Dendritic cell treated with granulocyte-macrophage colony-stimulating factor and Interleukin-4, amounts not matched to agents 40 ng/mL and 50 ng/mL, for 4 days (primary cell): ENCODE measurements at regions of chr7 and their contacts with region 1.

Region 1: GRCh38 chr7:17234398-17235031 is 63.9 kb upstream of the AHR start:
- H3K4me3 Mint-ChIP-seq: peak overlapping the region; percentile 57
- H3K27ac Mint-ChIP-seq: peak overlapping the region; percentile 96
- H3K4me1 Mint-ChIP-seq: peaks cover 53% of the 10 kb centered on the region
- H3K27me3 Mint-ChIP-seq: no peaks in the 10 kb centered on the region

Region 2: DNA sequence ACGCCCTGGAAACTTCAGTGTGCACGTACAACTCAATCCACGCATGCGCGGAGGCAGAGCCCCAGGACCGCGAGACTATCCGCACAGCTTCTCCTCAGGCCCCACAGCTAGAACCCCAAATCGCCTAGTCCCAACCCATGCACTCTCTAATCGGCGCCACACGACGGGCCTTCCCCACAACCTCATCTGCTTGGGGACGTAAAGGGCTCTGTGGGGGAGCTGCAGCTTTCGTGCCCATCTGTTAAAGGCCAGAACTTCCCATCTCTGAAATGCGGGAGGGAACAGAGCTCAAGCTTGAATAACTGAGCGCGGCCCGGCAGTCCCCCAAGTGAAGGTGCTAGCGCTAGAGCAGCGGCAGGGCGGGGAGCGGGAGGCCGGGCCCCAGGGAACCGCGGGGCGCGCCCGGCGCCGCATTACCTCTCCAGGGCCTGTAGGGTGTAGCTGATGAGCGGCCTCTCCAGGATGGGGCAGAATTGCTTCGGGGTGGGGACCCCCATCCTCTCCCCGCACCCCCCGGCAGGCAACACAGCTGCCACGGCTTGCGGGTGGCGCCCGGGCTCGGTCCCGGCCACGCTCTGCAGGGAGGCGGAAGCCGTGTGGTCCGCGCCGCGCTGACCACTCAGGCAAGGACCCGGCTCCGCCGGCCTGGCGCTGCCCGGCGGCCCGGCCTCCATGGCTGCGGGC is 813.7 kb before region 1 on chr7:
- intact Hi-C with region 1: no loop called
- H3K4me3 Mint-ChIP-seq: peak overlapping the region; percentile 84
- H3K27ac Mint-ChIP-seq: peak overlapping the region; percentile 57
- H3K4me1 Mint-ChIP-seq: peaks cover 29% of the 10 kb centered on the region
- H3K27me3 Mint-ChIP-seq: peaks cover 73% of the 10 kb centered on the region

Region 3: DNA sequence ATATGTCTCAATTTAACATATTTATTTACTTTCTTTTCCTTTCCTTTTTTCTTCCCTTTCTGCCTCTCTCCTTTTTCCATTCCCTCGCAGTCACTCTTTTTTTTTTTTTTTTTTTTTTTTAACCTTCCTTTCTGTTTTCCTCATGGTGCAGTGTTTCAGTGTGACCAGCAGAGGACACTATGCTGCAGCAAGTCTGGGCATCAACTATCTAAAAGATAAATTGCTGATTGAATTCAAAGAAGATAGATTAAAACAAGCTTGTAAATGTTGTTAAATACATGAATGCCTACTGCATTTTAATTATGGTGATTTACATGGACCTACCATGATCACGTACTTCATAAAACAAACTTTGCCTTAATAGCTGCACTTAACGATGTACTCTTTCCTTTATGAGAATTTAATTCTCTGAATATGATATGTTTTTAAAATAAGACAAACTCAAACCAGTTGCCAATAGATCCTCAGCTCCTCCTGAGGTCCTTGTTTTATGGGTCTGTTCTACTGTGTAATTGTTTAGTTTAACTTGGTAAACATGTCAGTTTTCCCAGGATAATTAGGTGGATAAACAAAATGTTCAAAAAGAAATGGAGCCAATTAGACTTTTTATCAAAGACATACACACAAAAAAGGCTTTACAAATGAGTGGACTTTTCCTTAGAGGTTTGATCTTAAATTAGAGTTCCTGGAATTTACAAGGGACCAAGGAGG is 251.7 kb before region 1 on chr7:
- intact Hi-C with region 1: loop called (anchors 5 kb)
- H3K4me3 Mint-ChIP-seq: peak overlapping the region; percentile 24
- H3K27ac Mint-ChIP-seq: peak overlapping the region; percentile 56
- H3K4me1 Mint-ChIP-seq: peaks cover 23% of the 10 kb centered on the region
- H3K27me3 Mint-ChIP-seq: peaks cover 3% of the 10 kb centered on the region

Region 4: GRCh38 chr7:17152721-17153120 is 81.8 kb before region 1 on chr7:
- intact Hi-C with region 1: loop called (anchors 5 kb)
- H3K4me3 Mint-ChIP-seq: peak overlapping the region; percentile 50
- H3K27ac Mint-ChIP-seq: peak overlapping the region; percentile 89
- H3K4me1 Mint-ChIP-seq: peaks cover 56% of the 10 kb centered on the region
- H3K27me3 Mint-ChIP-seq: no peaks in the 10 kb centered on the region

Region 5: DNA sequence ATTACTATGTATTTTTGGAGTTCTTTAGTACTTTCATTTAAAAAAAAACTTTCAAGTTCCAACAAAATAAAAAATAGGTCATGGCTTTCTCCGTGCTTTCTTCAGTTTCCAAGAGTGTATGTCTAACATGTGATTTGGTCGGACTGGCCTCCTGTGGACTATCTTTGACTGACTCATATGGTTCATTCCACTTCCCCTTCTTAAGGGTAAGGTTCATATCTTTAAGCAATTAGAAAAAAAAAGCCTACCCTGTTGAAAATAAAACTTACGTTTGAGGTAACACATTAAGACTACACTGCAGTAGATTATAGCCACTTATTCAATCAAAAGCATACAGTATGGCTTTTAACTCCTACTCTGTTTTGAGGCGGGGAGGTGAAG is 48.8 kb before region 1 on chr7:
- intact Hi-C with region 1: loop called (anchors 10 kb)
- H3K4me3 Mint-ChIP-seq: no peak overlapping the region
- H3K27ac Mint-ChIP-seq: peak overlapping the region; percentile 64
- H3K4me1 Mint-ChIP-seq: peaks cover 27% of the 10 kb centered on the region
- H3K27me3 Mint-ChIP-seq: no peaks in the 10 kb centered on the region